Breast epithelium (tissue), 4 donors: ENCODE measurements at regions of chrX and their contacts with region 1.

Region 1: DNA sequence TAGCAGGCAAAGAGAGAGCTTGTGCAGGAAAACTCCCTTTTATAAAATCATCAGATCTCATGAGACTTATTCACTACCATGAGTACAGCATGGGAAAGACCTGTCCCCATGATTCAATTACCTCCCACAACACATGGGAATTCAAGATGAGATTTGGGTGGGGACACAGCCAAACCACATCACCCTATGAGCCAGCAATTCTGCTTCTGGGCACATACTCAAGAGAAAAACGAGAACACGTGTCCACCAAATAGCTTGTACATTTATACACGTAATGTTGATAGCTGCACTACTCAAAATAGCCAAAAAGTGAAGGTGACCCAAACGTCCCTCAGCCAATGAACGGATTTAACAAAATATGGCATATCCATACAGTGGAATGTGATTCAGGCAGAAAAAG is 94.5 kb upstream of the DHRSX start:
- DNase-seq: no peak
- H3K4me3 ChIP-seq: no peak overlapping the region
- H3K27ac ChIP-seq: no peak overlapping the region
- H3K4me1 ChIP-seq: no peaks in the 10 kb centered on the region
- H3K27me3 ChIP-seq: no peaks in the 10 kb centered on the region
- CTCF ChIP-seq: no peak
- POLR2A ChIP-seq: no peak

Region 2: GRCh38 chrX:1222531-1223241 is 1372.6 kb before region 1 on chrX:
- intact Hi-C with region 1: no loop called
- DNase-seq: no peak
- H3K4me3 ChIP-seq: no peak overlapping the region
- H3K27ac ChIP-seq: no peak overlapping the region
- H3K4me1 ChIP-seq: no peaks in the 10 kb centered on the region
- H3K27me3 ChIP-seq: no peaks in the 10 kb centered on the region
- CTCF ChIP-seq: no peak
- POLR2A ChIP-seq: no peak

Region 3: DNA sequence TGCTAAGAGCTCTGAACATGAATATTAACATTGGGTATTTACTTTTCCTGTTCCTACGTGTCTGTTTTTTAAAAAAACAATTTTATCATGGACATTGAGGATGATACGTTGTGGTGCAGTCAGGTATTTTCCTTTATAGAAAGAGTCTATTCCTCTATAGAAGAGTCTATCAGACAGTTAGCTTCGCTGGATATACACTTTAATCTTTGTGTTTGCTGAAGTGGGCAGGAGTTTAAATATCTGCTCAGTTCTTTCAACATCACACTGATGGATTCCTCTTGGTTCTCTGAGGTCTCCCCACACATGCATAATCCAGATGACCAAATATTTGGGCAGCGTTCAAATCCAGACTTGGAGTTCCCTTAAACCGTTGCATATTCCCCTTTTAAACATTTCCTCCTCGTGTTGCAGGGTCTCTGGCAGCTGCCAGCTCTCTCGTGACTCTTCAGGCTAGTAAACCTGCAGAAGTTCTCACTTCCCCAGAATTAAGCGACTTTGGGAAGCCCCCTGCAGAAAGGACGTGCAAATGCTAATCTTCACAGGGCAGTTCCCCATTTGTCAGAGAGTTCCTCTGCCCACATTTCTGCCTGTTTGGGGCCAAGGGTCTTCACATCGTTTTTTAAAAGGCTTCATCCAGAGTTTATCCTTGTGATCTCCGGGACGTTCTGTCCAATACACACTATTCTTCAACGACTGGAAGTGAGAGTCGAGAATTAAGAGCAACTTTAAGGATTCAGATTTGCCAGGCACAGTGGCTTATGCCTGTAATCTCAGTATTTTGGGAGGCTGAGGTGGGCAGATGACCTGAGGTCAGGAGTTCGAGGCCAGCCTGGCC is 73.9 kb before region 1 on chrX:
- intact Hi-C with region 1: no loop called
- DNase-seq: no peak
- H3K4me3 ChIP-seq: no peak overlapping the region
- H3K27ac ChIP-seq: no peak overlapping the region
- H3K4me1 ChIP-seq: no peaks in the 10 kb centered on the region
- H3K27me3 ChIP-seq: no peaks in the 10 kb centered on the region
- CTCF ChIP-seq: no peak
- POLR2A ChIP-seq: no peak

Region 4: DNA sequence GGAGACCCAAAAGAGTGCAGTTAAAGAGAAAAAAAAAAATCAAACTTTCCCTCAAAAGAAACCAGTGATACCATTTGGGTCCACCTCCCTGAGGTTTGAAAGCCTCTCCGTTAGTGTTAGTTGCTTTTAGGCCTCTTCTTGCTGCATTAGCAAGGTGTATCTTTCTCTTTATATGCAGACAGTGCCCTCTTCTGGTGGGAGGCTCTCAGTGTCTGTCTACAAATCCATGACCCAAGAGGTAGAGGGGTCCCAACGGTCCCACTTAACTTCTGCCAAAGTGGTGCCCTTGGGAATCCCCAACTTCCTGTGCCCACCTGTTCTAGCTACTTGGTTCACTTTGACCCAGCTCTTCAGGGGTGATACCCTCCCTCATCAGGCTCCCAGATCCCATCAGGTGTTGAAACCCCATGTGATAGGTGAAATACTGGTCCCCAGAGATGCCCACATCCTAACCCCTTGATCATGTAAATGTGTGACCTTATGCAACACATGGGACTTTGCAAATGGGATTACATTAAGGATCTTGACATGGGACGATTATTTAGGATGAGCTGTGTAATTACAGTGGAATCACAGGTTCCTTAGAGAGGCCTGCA is 32.1 kb after region 1 on chrX:
- intact Hi-C with region 1: loop called (anchors 2 kb)
- DNase-seq: no peak
- H3K4me3 ChIP-seq: no peak overlapping the region
- H3K27ac ChIP-seq: no peak overlapping the region
- H3K4me1 ChIP-seq: no peaks in the 10 kb centered on the region
- H3K27me3 ChIP-seq: no peaks in the 10 kb centered on the region
- CTCF ChIP-seq: peak in 1 of 3 donors; percentile 35
- POLR2A ChIP-seq: no peak